CD8-positive, alpha-beta memory T cell (primary cell): ENCODE measurements at regions of chr1 and their contacts with region 1.

Region 1: GRCh38 chr1:36323597-36324352 is at the start of gene EVA1B:
- DNase-seq: peak in 4 of 5 donors; percentile 34 to 66 (median 50)
- H3K4me3 ChIP-seq: peak within 1 kb of the TSS; percentile 70
- H3K4me3 Mint-ChIP-seq: peak within 1 kb of the TSS; percentile 81 to 90 (median 84)
- H3K27ac ChIP-seq: peak within 1 kb of the TSS; percentile 54
- H3K27ac Mint-ChIP-seq: peak within 1 kb of the TSS; percentile 32 to 90 (median 78)
- H3K4me1 ChIP-seq: peaks cover 10% of the 10 kb centered on the region
- H3K4me1 Mint-ChIP-seq: peaks cover 25 to 38% (median 26%) of the 10 kb centered on the region in 3 donors
- H3K27me3 ChIP-seq: no peaks in the 10 kb centered on the region
- H3K27me3 Mint-ChIP-seq: peaks cover 0 to 1% of the 10 kb centered on the region in 2 donors
- total RNA-seq, gene EVA1B: 13.6 to 16.3 TPM

Region 2: DNA sequence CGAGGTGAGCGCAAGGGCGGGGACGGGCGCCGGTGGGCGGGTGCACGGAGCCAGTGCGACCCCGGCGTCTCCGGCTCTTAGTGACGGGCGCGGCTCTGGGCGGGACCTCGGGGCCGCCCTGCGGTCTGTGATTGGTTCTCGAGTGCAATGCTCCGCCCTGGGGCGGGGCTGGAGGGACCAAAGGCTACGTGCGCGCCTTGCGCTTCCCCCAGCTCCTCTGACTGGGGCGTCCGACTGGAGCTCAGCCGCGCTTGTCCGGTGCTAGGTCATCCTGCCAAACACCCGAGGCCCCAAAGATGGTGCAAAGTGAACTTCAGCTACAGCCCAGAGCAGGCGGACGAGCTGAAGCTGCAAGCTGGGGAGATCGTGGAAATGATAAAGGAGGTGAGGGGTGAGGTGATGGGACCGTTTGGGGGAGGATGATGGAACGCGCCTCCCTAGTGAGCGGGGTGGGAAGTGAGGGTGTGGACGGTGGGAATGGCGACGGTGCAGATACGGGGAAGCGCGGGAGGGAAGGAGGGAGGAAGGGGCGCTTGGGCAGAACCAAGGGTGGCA is 16.8 kb before region 1 on chr1:
- CTCF ChIA-PET with region 1: interaction called, 16 read pairs
- POLR2A ChIA-PET with region 1: interaction called, 13 read pairs
- DNase-seq: peak; percentile 90 to 96 (median 92)
- H3K4me3 ChIP-seq: peak overlapping the region; percentile 86
- H3K4me3 Mint-ChIP-seq: peak overlapping the region; percentile 85 to 98 (median 94)
- H3K27ac ChIP-seq: peak overlapping the region; percentile 51
- H3K27ac Mint-ChIP-seq: peak overlapping the region; percentile 35 to 97 (median 94)
- H3K4me1 ChIP-seq: peaks cover 14% of the 10 kb centered on the region
- H3K4me1 Mint-ChIP-seq: peaks cover 10 to 18% (median 17%) of the 10 kb centered on the region in 3 donors
- H3K27me3 ChIP-seq: no peaks in the 10 kb centered on the region
- H3K27me3 Mint-ChIP-seq: no peaks in the 10 kb centered on the region